Activated CD4-positive, alpha-beta memory T cell treated with anti-CD3 and anti-CD28 coated beads for 36 hours (primary cell): ENCODE measurements at regions of chr7 and their contacts with region 1.

Region 1: GRCh38 chr7:100889761-100890634 is 483 bp upstream of the UFSP1 start:
- DNase-seq: peak; percentile 93
- H3K4me3 Mint-ChIP-seq: peak overlapping the region; percentile 79
- H3K27ac Mint-ChIP-seq: peak overlapping the region; percentile 58
- H3K4me1 Mint-ChIP-seq: peaks cover 45% of the 10 kb centered on the region
- H3K27me3 Mint-ChIP-seq: peaks cover 20% of the 10 kb centered on the region

Region 2: GRCh38 chr7:100852048-100852872 is 37.7 kb before region 1 on chr7 and contains the start of gene SLC12A9:
- CTCF ChIA-PET with region 1: interaction called, 19 read pairs
- POLR2A ChIA-PET with region 1: interaction called, 4 read pairs
- intact Hi-C with region 1: no loop called
- DNase-seq: peak; percentile 92
- H3K4me3 Mint-ChIP-seq: peak within 1 kb of the TSS; percentile 92
- H3K27ac Mint-ChIP-seq: peak within 1 kb of the TSS; percentile 81
- H3K4me1 Mint-ChIP-seq: peaks cover 13% of the 10 kb centered on the region
- H3K27me3 Mint-ChIP-seq: no peaks in the 10 kb centered on the region
- total RNA-seq, gene SLC12A9: 17.8 to 18.5 TPM

Region 3: DNA sequence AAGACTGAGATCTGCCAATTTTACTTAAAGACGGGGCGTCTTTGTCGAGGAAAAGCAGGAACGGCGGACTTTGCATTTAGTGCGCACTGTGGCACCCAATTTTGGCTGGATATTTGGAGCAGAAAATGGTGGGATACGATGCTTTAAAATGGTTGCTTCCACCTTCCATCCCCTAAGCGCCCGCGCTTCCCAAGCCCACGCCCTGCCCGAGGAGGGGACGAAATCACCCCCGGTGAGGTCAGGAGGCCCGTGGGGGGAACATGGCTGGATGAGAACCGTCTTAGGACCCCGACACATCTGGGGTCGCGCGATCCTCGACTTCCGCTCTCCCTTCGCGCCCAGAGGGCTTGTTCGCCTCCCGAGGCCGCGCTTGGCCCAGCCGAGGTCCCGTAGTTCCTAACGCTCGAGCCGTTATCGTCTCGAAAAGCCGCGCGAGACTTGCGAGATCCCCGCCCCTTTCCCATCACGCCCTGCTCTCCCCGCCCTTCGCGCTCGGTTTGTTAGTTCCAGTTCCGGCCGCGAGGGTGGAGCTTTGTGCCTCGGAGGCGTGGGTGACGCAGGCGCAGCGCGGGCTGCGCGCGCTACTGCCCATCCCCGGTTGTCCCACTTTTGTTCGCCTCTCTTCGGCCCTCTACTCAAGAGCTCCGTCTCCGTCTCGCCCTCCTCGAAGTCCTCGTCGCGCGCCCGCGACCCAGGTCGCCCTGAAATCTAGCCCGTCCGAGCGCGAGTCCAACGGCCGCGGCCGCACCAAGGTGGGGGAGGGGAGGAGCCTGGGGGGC is 15.2 kb before region 1 on chr7 and contains the start of gene SRRT:
- CTCF ChIA-PET with region 1: interaction called, 11 read pairs
- POLR2A ChIA-PET with region 1: interaction called, 107 read pairs
- intact Hi-C with region 1: loop called (anchors 1 kb)
- DNase-seq: peak; percentile 99
- H3K4me3 Mint-ChIP-seq: peak within 1 kb of the TSS; percentile 99
- H3K27ac Mint-ChIP-seq: peak within 1 kb of the TSS; percentile 100
- H3K4me1 Mint-ChIP-seq: peaks cover 43% of the 10 kb centered on the region
- H3K27me3 Mint-ChIP-seq: no peaks in the 10 kb centered on the region
- total RNA-seq, gene SRRT: 209 to 223 TPM

Region 4: GRCh38 chr7:100965723-100966541 is 75.9 kb after region 1 on chr7:
- CTCF ChIA-PET with region 1: interaction called, 3 read pairs
- POLR2A ChIA-PET with region 1: no interaction called
- intact Hi-C with region 1: loop called (anchors 5 kb)
- DNase-seq: peak; percentile 90
- H3K4me3 Mint-ChIP-seq: peak overlapping the region; percentile 43
- H3K27ac Mint-ChIP-seq: no peak overlapping the region
- H3K4me1 Mint-ChIP-seq: peaks cover 15% of the 10 kb centered on the region
- H3K27me3 Mint-ChIP-seq: peaks cover 45% of the 10 kb centered on the region

Region 5: DNA sequence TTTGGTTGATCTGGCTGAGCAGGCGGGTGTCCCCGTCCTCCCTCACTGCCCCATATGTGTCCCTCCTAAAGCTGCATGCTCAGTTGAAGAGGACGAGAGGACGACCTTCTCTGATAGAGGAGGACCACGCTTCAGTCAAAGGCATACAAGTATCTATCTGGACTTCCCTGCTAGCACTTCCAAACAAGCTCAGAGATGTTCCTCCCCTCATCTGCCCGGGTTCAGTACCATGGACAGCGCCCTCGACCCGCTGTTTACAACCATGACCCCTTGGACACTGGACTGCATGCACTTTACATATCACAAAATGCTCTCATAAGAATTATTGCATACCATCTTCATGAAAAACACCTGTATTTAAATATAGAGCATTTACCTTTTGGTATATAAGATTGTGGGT is 168.4 kb after region 1 on chr7:
- CTCF ChIA-PET with region 1: interaction called, 17 read pairs
- POLR2A ChIA-PET with region 1: no interaction called
- intact Hi-C with region 1: loop called (anchors 2 kb)
- DNase-seq: peak; percentile 63
- H3K4me3 Mint-ChIP-seq: no peak overlapping the region
- H3K27ac Mint-ChIP-seq: no peak overlapping the region
- H3K4me1 Mint-ChIP-seq: peaks cover 3% of the 10 kb centered on the region
- H3K27me3 Mint-ChIP-seq: peaks cover 36% of the 10 kb centered on the region

Region 6: DNA sequence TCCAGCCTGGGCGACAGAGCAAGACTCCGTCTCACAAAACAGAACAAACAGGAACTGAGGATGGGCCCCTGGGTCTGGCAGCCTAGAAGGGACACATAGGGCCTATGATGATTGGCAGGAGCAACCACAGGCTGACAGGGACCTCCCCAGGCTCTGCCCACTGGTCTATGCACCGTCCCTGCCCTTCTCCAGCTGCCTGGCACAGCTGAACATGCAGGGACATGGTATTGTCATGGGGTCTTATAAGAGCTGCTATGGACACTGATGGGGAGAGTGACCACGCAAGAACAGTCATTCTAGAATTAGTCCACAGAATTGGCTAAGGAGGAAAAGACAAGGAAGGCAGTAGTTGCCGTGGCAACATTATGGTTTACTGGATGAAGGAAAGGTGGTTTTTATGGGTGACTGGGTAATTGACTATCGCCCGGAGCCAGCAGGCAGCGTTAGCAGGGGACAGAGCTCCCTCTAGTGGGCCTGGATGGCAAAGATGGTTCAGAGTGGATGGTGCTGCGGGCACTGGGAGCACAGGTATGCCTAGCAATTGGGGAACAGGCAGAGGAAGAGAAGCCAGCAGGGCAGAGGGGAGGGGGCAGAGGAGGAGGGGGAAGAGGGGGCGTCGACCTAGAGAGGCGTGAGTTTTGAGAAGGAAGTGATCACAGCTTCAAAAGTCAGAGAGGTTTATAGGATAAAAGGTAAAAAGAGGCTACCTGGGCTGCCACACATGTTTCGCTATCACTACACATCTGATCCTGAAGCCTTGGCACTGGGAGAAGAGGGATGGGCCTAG is 187.5 kb after region 1 on chr7:
- CTCF ChIA-PET with region 1: interaction called, 13 read pairs
- POLR2A ChIA-PET with region 1: interaction called, 4 read pairs
- intact Hi-C with region 1: loop called (anchors 5 kb)
- DNase-seq: peak; percentile 90
- H3K4me3 Mint-ChIP-seq: no peak overlapping the region
- H3K27ac Mint-ChIP-seq: no peak overlapping the region
- H3K4me1 Mint-ChIP-seq: peaks cover 4% of the 10 kb centered on the region
- H3K27me3 Mint-ChIP-seq: no peaks in the 10 kb centered on the region

Region 7: DNA sequence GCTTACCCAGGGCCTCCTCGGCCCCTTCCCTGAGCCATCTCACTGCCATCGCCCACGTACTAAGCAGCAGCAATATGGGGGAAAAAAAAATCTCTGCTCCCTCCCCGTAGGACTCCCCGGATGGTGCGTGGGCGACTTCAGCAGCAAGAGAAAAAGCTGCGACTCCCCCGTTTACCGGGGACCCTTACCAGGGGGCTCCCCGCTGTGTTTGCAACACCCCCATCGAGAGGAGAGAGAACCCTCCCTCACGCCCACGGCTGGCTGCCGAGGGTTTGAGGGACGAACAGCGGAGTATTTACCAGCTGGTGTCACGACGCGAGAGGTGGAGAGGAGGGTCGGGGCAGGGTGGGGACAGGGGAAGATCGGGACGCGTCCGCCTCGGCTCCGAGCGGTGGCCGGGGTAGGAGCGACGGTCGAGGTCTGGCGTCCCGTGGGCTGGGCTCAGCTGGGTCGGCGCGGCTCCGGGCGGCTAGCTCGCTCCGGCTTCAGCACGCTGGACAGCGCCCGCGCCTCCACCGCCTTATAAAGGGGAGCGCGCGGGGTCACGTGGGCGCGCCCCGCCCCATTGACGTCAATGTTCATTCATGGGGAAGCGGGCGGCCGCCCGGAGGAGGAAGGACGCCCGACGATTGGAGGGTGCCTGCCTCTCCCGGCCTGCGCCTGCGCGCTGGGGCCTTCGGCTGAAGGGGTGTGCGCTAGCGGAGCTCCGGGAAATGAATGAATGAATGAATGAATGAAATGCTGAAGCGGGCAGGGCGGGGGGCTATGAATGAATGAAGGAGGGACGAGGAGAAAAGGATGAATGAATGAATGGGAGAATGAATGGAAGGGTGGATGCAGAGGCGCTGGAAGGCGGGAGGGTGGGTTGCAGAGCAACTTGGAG is 275.3 kb after region 1 on chr7 and contains the start of gene VGF:
- CTCF ChIA-PET with region 1: interaction called, 3 read pairs
- POLR2A ChIA-PET with region 1: interaction called, 4 read pairs
- intact Hi-C with region 1: loop called (anchors 5 kb)
- DNase-seq: peak; percentile 95
- H3K4me3 Mint-ChIP-seq: peak within 1 kb of the TSS; percentile 71
- H3K27ac Mint-ChIP-seq: no peak within 1 kb of the TSS
- H3K4me1 Mint-ChIP-seq: peaks cover 53% of the 10 kb centered on the region
- H3K27me3 Mint-ChIP-seq: peaks cover 60% of the 10 kb centered on the region
- total RNA-seq, gene VGF: not detected